ENCODE measurements at regions of chr4 and their contacts with region 1.

Region 1: GRCh38 chr4:113878668-113879067 is 100.8 kb downstream of the ARSJ start:
- DNase-seq: no peak
- H3K4me3 ChIP-seq: no peak overlapping the region
- H3K4me3 Mint-ChIP-seq: no peak overlapping the region
- H3K27ac ChIP-seq: no peak overlapping the region
- H3K27ac Mint-ChIP-seq: no peak overlapping the region
- H3K4me1 ChIP-seq: no peaks in the 10 kb centered on the region
- H3K4me1 Mint-ChIP-seq: peaks cover 0 to 9% (median 5%) of the 10 kb centered on the region in 4 donors
- H3K27me3 ChIP-seq: no peaks in the 10 kb centered on the region
- H3K27me3 Mint-ChIP-seq: no peaks in the 10 kb centered on the region

Region 2: DNA sequence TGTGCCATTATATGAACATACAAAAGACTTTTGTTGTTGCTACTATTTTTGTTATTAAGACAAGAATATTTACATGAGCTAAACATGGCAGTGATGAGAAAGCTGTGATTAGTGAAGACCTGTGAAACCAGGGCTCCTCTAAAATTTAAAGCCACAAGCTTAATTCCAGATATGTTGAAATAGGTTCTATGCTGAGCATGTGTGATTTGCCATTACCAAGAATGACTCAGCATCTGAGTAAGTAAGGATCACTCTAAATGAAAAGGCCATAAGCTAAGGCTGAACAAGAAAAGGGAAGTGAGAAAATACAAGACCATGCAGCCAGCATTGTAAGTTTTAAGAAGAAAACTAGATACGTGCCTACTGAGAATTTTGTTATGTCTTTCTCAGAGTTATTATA is 41.3 kb before region 1 on chr4:
- CTCF ChIA-PET with region 1: no interaction called
- POLR2A ChIA-PET with region 1: no interaction called
- intact Hi-C with region 1: no loop called
- DNase-seq: no peak
- H3K4me3 ChIP-seq: no peak overlapping the region
- H3K4me3 Mint-ChIP-seq: no peak overlapping the region
- H3K27ac ChIP-seq: no peak overlapping the region
- H3K27ac Mint-ChIP-seq: no peak overlapping the region
- H3K4me1 ChIP-seq: no peaks in the 10 kb centered on the region
- H3K4me1 Mint-ChIP-seq: peaks cover 0 to 2% (median 0%) of the 10 kb centered on the region in 4 donors
- H3K27me3 ChIP-seq: no peaks in the 10 kb centered on the region
- H3K27me3 Mint-ChIP-seq: peaks cover 0 to 1% of the 10 kb centered on the region in 2 donors

Region 3: GRCh38 chr4:113908829-113909228 is 30.2 kb after region 1 on chr4:
- CTCF ChIA-PET with region 1: interaction called, 4 read pairs
- POLR2A ChIA-PET with region 1: no interaction called
- intact Hi-C with region 1: loop called (anchors 2 kb)
- DNase-seq: peak; percentile 12 to 36 (median 24)
- H3K4me3 ChIP-seq: no peak overlapping the region
- H3K4me3 Mint-ChIP-seq: no peak overlapping the region
- H3K27ac ChIP-seq: no peak overlapping the region
- H3K27ac Mint-ChIP-seq: peak overlapping the region in 1 of 7 donors; percentile 14
- H3K4me1 ChIP-seq: peaks cover 28% of the 10 kb centered on the region
- H3K4me1 Mint-ChIP-seq: peaks cover 13 to 36% (median 21%) of the 10 kb centered on the region in 4 donors
- H3K27me3 ChIP-seq: no peaks in the 10 kb centered on the region
- H3K27me3 Mint-ChIP-seq: no peaks in the 10 kb centered on the region

Measured in CD4-positive, alpha-beta memory T cell (primary cell).